Esophagus muscularis mucosa (tissue), 4 donors: ENCODE measurements at regions of chr18 and their contacts with region 1.

Region 1: GRCh38 chr18:8229775-8230174 is 379.5 kb upstream of the RAB12 start:
- DNase-seq: no peak
- H3K4me3 ChIP-seq: no peak overlapping the region
- H3K27ac ChIP-seq: no peak overlapping the region
- H3K4me1 ChIP-seq: peaks cover 0 to 3% (median 0%) of the 10 kb centered on the region in 4 donors
- H3K27me3 ChIP-seq: no peaks in the 10 kb centered on the region
- CTCF ChIP-seq: no peak
- EP300 ChIP-seq: no peak
- POLR2A ChIP-seq: no peak

Region 2: DNA sequence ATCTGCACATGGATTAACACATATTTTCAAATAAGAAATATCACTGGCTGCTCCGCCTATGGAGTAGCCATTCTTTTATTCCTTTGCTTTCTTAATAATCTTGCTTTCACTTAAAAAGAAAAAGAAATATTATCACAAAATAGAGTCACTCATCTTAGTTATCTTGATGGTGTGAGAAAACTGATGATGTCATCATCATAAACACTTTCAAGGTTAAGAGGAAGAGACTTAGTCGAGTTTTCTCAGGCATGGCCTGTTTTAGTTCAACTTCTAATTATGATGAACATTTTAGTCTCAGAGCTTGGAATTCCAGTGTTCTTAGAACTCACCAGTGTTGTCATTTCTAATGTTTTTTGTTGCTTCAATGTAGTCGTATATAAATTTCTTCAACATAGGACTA is 156.6 kb before region 1 on chr18:
- intact Hi-C with region 1: loop called (anchors 10 kb)
- DNase-seq: no peak
- H3K4me3 ChIP-seq: no peak overlapping the region
- H3K27ac ChIP-seq: no peak overlapping the region
- H3K4me1 ChIP-seq: no peaks in the 10 kb centered on the region
- H3K27me3 ChIP-seq: no peaks in the 10 kb centered on the region
- CTCF ChIP-seq: no peak
- EP300 ChIP-seq: no peak
- POLR2A ChIP-seq: no peak

Region 3: DNA sequence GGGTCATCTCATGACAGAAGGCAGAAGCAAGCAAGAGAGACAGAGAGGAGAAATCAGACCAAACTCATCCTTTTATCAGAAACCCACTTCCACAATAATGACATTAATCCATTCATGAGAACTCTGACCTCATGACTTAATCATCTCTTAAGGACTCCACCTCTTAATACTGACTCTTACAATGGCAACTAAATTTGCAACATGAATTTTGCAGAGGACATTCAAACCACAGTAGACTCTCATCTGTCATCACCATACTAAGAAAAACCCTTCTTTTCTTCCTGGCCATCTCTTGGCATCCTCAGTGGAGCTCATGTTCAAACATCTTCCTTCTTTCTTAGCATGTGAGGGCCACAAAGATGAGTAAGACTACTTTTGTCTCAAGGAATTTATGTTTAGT is 96.7 kb before region 1 on chr18:
- intact Hi-C with region 1: no loop called
- DNase-seq: no peak
- H3K4me3 ChIP-seq: no peak overlapping the region
- H3K27ac ChIP-seq: no peak overlapping the region
- H3K4me1 ChIP-seq: no peaks in the 10 kb centered on the region
- H3K27me3 ChIP-seq: no peaks in the 10 kb centered on the region
- CTCF ChIP-seq: no peak
- EP300 ChIP-seq: no peak
- POLR2A ChIP-seq: no peak

Region 4: DNA sequence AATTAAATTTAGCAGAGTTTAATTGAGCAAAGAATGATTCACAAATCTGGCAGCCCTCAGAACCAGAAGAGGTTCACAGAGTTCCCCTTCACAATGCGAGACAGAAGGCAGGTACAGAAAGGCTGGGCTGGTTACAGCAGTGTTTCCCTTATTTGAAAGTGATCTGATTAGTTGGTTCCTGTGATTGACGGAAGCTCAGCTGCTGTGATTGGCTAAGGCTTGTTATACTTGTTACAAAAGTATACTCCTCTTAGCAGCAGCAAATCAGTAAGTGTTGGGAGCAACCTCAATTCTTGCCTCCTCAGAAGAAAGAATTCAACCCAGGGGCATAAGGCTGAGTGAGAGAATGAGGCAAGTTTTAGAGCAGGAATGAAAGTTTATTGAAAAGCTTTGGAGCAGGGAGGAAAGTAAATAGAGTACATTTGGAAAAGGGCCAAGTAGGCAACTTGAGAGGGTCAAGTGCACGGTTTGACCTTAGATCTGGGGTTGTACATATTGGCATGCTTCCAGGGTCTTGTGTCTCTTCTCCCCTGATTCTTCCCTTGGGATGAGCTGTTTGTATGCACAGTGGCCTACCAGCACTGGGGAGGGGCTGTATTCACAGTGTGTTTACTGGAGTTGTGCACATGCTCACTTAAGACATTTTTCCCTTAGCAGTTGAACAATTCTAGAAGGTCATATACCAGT is 52.3 kb before region 1 on chr18:
- intact Hi-C with region 1: no loop called
- DNase-seq: no peak
- H3K4me3 ChIP-seq: no peak overlapping the region
- H3K27ac ChIP-seq: peak overlapping the region in 3 of 4 donors; percentile 4 to 37 (median 24)
- H3K4me1 ChIP-seq: peaks cover 28 to 35% (median 34%) of the 10 kb centered on the region in 4 donors
- H3K27me3 ChIP-seq: no peaks in the 10 kb centered on the region
- CTCF ChIP-seq: no peak
- EP300 ChIP-seq: no peak
- POLR2A ChIP-seq: no peak